ENCODE measurements at regions of chr1 and their contacts with region 1.

Region 1: DNA sequence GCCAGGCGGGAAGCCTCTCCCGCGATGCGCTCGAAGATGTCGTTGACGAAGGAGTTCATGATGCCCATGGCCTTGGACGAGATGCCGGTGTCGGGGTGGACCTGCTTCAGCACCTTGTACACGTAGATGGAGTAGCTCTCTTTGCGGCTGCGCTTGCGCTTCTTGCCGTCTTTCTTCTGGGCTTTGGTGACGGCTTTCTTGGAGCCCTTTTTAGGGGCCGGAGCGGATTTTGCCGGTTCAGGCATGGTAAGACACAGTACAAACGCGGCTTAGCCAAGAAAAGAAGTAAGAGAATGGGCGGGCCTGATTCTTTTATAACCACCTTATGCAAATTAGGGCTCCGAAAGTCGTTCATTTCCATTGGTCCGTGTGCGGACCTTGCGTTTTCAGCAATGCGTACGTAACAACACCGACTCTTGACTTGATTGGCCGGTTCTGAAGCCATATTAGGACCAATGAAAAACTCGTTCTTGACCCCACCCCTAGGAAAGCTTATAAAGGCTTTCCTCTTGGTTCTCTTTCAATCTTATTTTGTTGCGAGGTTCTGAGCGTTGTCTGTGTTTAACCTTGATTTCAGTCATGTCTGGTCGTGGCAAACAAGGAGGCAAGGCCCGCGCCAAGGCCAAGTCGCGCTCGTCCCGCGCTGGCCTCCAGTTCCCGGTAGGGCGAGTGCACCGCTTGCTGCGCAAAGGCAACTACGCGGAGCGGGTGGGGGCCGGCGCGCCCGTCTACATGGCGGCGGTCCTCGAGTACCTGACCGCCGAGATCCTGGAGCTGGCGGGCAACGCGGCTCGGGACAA is 12.8 kb upstream of the BOLA1 start:
- DNase-seq: peak; percentile 88
- ATAC-seq: peak; percentile 59
- H3K4me3 Mint-ChIP-seq: no peak overlapping the region
- H3K27ac Mint-ChIP-seq: no peak overlapping the region
- H3K4me1 Mint-ChIP-seq: peaks cover 16% of the 10 kb centered on the region
- H3K27me3 Mint-ChIP-seq: no peaks in the 10 kb centered on the region

Region 2: DNA sequence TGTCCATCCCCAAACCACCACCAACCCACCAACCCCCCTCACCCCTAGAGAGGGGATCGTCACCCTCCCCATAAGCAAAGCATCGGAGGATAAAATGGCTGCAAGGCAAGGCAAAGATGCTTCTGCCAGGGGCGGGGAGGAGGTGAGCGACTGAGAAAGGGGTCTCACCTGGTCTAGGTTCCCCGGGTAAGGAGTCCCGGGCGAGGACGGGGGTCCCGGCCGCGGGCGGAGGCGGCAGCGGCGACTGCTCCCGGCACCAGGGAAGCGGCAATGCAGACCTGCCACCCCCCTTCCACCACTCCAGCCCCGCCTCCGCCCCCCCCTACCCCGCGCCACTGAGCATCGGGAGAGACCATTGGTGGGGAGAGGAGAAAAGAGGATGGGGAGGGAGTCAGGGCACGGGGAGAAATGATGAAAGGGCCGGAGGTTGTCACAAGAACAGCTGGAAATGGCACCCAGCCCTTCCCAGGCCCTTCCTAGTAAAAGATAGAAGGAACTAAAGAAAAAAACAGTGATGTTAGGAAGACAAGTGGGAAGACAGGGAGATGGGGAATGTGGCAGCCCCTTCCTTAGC is 31.1 kb after region 1 on chr1 and contains the start of gene SV2A:
- POLR2A ChIA-PET with region 1: interaction called, 49 read pairs
- DNase-seq: peak; percentile 64
- ATAC-seq: peak; percentile 74
- H3K4me3 Mint-ChIP-seq: peak within 1 kb of the TSS; percentile 96
- H3K27ac Mint-ChIP-seq: peak within 1 kb of the TSS; percentile 91
- H3K4me1 Mint-ChIP-seq: peaks cover 42% of the 10 kb centered on the region
- H3K27me3 Mint-ChIP-seq: no peaks in the 10 kb centered on the region
- total RNA-seq, gene SV2A: 23.9 to 27.5 TPM

Region 3: DNA sequence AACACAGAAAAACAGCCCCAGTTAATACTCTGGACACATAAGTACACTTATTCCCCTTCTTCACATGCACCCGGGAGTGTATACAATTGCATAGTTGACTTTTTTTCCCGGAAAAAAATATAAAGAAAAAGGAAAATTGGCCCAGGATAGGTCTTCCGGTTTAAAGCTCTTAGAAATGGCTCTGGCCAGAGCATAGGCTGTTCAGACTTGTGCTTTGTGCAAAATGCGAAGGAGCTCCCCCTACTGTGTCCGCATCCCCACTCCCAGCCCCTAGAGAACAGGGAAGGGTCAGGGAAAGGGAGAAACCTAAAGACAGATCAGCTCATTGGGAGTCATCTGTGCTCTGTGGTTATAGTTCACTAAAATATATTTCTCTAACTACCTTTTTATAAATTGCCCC is 55.6 kb after region 1 on chr1:
- POLR2A ChIA-PET with region 1: interaction called, 46 read pairs
- DNase-seq: no peak
- ATAC-seq: no peak
- H3K4me3 Mint-ChIP-seq: no peak overlapping the region
- H3K27ac Mint-ChIP-seq: no peak overlapping the region
- H3K4me1 Mint-ChIP-seq: peaks cover 27% of the 10 kb centered on the region
- H3K27me3 Mint-ChIP-seq: no peaks in the 10 kb centered on the region

Region 4: GRCh38 chr1:150067184-150068036 is 180.8 kb after region 1 on chr1 and contains the start of gene VPS45:
- POLR2A ChIA-PET with region 1: interaction called, 47 read pairs
- DNase-seq: peak; percentile 84
- ATAC-seq: peak; percentile 97
- H3K4me3 Mint-ChIP-seq: peak within 1 kb of the TSS; percentile 95
- H3K27ac Mint-ChIP-seq: peak within 1 kb of the TSS; percentile 93
- H3K4me1 Mint-ChIP-seq: peaks cover 31% of the 10 kb centered on the region
- H3K27me3 Mint-ChIP-seq: no peaks in the 10 kb centered on the region
- total RNA-seq, gene VPS45: 41.1 to 42.6 TPM

Region 5: GRCh38 chr1:150186789-150187559 is 300.4 kb after region 1 on chr1:
- POLR2A ChIA-PET with region 1: interaction called, 22 read pairs
- DNase-seq: no peak
- ATAC-seq: peak; percentile 39
- H3K4me3 Mint-ChIP-seq: no peak overlapping the region
- H3K27ac Mint-ChIP-seq: no peak overlapping the region
- H3K4me1 Mint-ChIP-seq: peaks cover 5% of the 10 kb centered on the region
- H3K27me3 Mint-ChIP-seq: peaks cover 3% of the 10 kb centered on the region